OCI-LY7 (cell line): ENCODE measurements at regions of chr5 and their contacts with region 1.

Region 1: DNA sequence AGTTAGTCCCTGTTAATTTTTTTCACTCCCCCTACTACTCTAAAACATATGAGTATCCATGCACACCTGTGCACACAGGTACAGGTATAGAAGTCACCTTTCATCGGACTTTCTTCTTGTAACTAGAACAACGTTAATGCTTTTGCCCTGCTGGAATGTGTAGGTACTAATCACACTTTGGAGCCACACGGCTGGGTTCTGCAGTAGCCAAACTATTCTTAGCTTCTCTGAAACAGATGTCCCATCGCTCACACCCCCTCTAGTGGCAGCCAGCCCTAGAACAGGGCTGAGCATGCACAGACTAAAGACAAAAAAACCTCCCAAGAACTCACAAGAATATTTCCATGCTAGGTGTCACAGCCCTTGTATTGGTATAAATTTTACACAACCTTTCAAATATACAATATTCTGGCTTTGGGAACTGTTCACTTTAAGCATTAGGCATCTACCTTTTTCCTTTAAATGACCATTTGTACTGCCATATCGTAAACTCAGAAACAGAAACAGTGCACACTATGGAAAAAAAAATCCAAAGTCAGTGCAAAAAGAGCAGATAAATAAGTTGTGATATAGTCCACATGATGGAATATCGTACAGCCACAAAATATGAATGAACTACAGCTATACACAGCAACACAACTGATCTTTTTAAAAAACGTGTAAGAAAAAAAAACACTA is 64.0 kb downstream of the RETREG1 start:
- DNase-seq: peak; percentile 71
- H3K4me3 ChIP-seq: no peak overlapping the region
- H3K27ac ChIP-seq: peak overlapping the region; percentile 9
- H3K4me1 ChIP-seq: peaks cover 18% of the 10 kb centered on the region
- CTCF ChIP-seq: peak; percentile 90

Region 2: GRCh38 chr5:16160706-16161105 is 392.1 kb before region 1 on chr5:
- CTCF ChIA-PET with region 1: no interaction called
- POLR2A ChIA-PET with region 1: no interaction called
- intact Hi-C with region 1: loop called (anchors 5 kb)
- DNase-seq: peak; percentile 57
- H3K4me3 ChIP-seq: no peak overlapping the region
- H3K27ac ChIP-seq: no peak overlapping the region
- H3K4me1 ChIP-seq: no peaks in the 10 kb centered on the region
- CTCF ChIP-seq: peak; percentile 87

Region 3: GRCh38 chr5:16465544-16466466 is 87.0 kb before region 1 on chr5 and contains the start of gene ZNF622:
- CTCF ChIA-PET with region 1: no interaction called
- POLR2A ChIA-PET with region 1: interaction called, 4 read pairs
- intact Hi-C with region 1: loop called (anchors 2 kb)
- DNase-seq: peak; percentile 95
- H3K4me3 ChIP-seq: peak within 1 kb of the TSS; percentile 99
- H3K27ac ChIP-seq: peak within 1 kb of the TSS; percentile 44
- H3K4me1 ChIP-seq: peaks cover 35% of the 10 kb centered on the region
- CTCF ChIP-seq: no peak
- total RNA-seq, gene ZNF622: 25.7 and 30.5 TPM in 2 replicates

Region 4: DNA sequence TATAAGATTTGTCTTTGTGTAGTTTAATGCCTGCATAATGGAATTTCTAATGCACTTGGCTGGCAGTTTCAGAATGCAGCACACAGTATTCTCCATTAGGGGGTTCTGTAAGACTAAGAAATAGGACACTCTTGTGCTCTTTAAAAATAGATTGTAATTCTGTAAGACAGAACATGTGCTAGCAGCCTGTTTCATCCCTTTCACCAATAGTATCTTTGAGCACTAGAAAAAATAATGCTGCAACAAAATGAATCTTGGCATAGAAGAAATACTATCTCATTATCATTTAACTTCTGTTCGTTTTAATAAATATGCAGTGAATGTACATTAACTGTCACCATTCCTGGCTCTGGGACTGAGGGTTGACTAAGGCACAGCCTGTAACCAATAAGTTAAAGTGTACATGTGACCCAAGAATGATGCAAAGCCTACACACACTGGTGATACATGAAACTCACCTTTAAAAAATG is 63.4 kb before region 1 on chr5:
- CTCF ChIA-PET with region 1: no interaction called
- POLR2A ChIA-PET with region 1: interaction called, 3 read pairs
- intact Hi-C with region 1: loop called (anchors 2 kb)
- DNase-seq: peak; percentile 27
- H3K4me3 ChIP-seq: no peak overlapping the region
- H3K27ac ChIP-seq: no peak overlapping the region
- H3K4me1 ChIP-seq: no peaks in the 10 kb centered on the region
- CTCF ChIP-seq: peak; percentile 78

Region 5: GRCh38 chr5:16970826-16971225 is 418.0 kb after region 1 on chr5:
- CTCF ChIA-PET with region 1: no interaction called
- POLR2A ChIA-PET with region 1: no interaction called
- intact Hi-C with region 1: no loop called
- DNase-seq: no peak
- H3K4me3 ChIP-seq: no peak overlapping the region
- H3K27ac ChIP-seq: no peak overlapping the region
- H3K4me1 ChIP-seq: no peaks in the 10 kb centered on the region
- CTCF ChIP-seq: no peak